ENCODE measurements at regions of chr17 and their contacts with region 1.

Region 1: DNA sequence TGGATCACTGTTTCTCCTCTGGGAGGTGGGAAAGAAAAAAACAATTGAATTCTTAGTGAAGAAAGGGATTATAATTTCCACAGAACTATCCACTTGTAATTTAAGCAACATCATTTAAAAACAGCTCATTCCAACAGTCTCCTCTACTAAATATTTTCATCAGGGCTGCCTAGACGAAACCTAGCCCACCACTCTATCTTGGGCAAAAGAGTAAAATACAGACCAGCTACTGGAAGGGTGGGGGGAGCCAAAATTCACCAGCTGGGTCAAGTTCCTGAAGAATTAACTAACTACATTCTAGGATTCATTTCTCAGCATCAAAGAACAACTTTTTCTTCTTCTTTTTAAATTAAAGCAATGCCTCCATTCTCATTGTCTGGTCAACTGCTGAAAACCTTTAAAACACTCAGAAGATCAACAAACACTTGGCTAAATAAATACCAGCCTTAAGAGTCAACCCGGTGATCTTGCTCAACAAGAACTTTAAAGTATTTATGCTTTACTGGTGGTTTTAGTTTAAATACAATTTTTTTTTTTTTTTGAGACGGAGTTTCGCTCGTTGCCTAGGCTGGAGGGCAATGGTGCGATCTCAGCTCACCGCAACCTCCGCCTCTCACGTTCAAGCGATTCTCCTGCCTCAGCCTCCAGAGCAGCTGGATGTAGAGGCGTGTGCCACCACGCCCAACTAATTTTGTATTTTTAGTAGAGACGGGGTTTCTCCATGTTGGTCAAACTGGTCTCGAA is 25.2 kb downstream of the KANSL1 start:
- DNase-seq: peak in 1 of 2 experiments; percentile 61
- ATAC-seq: peak in 1 of 2 experiments; percentile 64; a peak in 3 of 6 replicates
- H3K4me3 ChIP-seq: peak overlapping the region; percentile 6; the same call in 1 of the 3 replicates
- H3K27ac ChIP-seq: peak overlapping the region; percentile 47 to 51
- H3K4me1 ChIP-seq: peaks cover 54% of the 10 kb centered on the region
- CTCF ChIP-seq: no peak
- EP300 ChIP-seq: no peak
- POLR2A ChIP-seq: no peak
- RAD21 ChIP-seq: no peak

Region 2: DNA sequence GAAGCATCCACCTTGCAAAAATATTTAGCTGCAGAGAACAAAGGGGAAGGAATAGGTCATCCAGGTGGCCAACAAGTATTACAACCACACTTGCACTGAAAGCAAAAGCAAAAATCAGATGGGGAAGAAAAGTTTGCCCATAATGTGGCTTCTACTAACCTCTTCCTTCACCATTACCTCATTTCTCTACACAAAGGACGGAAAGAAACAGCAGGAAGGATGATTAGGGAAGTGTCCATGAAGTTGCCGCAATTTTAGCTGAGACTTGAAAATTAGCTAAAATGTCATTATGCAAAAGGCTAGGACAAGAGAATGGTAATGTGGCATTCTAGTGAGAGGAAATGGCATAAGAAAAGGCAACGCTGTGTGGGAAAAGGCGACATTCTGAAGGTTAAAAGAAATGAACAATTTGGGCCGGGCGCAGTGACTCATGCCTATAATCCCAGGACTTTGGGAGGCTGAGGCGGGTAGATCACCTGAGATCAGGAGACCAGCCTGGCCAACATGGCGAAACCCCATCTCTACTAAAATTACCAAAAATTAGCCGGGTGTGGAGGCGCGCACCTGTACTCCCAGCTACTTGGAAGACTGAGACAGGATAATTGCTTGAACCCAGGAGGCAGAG is 11.5 kb after region 1 on chr17:
- CTCF ChIA-PET with region 1: interaction called, 72 read pairs
- POLR2A ChIA-PET with region 1: interaction called, 3 read pairs
- DNase-seq: no peak
- ATAC-seq: no peak
- H3K4me3 ChIP-seq: no peak overlapping the region
- H3K27ac ChIP-seq: no peak overlapping the region
- H3K4me1 ChIP-seq: peaks cover 66% of the 10 kb centered on the region
- CTCF ChIP-seq: no peak
- EP300 ChIP-seq: no peak
- POLR2A ChIP-seq: no peak
- RAD21 ChIP-seq: no peak

Measured in A549 (cell line).